SK-MEL-5 (cell line): ENCODE measurements at regions of chr1 and their contacts with region 1.

Region 1: GRCh38 chr1:216045400-216045799 is 377.8 kb downstream of the USH2A start:
- DNase-seq: peak; percentile 98

Region 2: DNA sequence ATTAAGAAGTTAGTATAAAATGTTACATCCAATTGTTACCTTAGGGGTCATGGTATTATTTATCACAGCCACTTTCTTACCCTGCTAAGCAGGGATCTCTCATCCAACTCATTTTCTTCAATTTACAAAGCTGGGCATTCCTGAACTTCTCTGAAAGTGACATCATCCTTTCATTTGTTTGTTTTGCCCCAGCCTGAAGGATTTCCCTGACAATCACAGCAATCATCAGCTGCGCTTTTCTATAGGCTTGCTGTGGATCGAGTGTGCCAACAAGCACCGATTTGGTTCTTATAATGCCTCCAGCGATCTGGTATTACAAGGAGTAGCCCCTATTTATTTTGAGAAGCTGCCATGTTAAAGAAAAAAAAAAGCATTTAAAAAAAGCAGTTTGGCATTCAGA is 137.6 kb after region 1 on chr1:
- in situ Hi-C with region 1: loop called (anchors 10 kb)
- DNase-seq: peak; percentile 24